Sciatic nerve (tissue), 2 donors: ENCODE measurements at regions of chr1 and their contacts with region 1.

Region 1: DNA sequence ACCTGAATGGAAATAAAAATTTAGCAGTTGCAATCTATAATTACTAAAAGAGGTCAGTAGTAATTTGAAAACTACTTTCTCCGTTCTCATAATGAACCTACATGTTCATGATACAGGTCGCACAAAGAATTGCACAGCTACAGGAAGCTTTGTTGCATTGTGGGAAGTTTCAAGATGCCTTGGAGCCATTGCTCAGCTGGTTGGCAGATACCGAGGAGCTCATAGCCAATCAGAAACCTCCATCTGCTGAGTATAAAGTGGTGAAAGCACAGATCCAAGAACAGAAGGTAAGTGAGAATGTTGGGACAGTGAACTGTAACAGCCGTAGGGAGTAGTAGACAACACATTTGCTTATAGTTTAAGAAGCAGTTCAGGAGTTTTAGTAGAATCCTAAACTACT is 68.8 kb upstream of the BMP8A start:
- DNase-seq: no peak
- ATAC-seq: no peak

Region 2: GRCh38 chr1:39380036-39380435 is 42.6 kb before region 1 on chr1:
- intact Hi-C with region 1: loop called (anchors 1 kb)
- DNase-seq: no peak
- ATAC-seq: no peak

Region 3: GRCh38 chr1:39398278-39399021 is 24.2 kb before region 1 on chr1:
- intact Hi-C with region 1: no loop called
- DNase-seq: no peak
- ATAC-seq: peak; percentile 94